ENCODE measurements at regions of chr9 and their contacts with region 1.

Region 1: DNA sequence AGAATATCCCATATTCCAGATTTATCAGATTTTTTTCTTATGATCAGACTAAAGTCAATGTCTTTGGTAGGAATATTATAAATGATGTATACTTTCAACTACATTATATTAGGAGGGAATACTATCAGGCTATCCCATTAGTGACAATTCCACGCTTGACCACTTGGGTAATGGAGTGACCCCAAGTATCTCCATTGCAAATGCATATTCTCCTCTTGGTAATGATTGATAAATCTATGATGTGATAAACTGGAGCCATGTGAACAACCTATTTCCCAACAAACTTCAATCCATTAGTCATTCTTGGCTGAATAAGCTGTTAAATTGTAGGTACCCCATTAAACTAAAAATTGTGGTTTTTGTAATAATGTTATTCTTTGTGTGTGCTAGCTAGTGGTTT is 12.2 kb upstream of the MPDZ start:
- DNase-seq: no peak
- H3K4me3 ChIP-seq: no peak overlapping the region
- H3K27ac ChIP-seq: no peak overlapping the region
- H3K4me1 ChIP-seq: peaks cover 13% of the 10 kb centered on the region
- H3K27me3 ChIP-seq: no peaks in the 10 kb centered on the region
- CTCF ChIP-seq: no peak

Region 2: DNA sequence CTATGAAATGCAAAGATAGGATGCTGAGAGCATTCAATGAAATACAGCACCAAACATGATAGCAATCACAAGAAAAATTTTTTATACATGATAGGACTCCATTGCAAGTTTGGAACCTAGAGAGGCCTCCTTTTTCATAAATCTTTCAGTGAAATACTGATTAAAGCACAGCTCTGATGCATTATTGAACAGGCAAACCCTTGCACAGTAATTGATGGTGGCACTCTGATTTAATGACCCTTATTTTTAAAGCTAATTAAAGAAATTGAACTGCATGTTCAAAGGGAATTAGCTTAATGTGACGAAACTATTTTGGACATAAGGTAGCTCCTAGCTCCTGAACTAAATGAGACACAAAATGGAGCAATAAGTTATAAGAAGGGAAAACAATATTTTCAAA is 56.8 kb before region 1 on chr9:
- intact Hi-C with region 1: loop called (anchors 2 kb)
- DNase-seq: no peak
- H3K4me3 ChIP-seq: no peak overlapping the region
- H3K27ac ChIP-seq: no peak overlapping the region
- H3K4me1 ChIP-seq: no peaks in the 10 kb centered on the region
- H3K27me3 ChIP-seq: no peaks in the 10 kb centered on the region
- CTCF ChIP-seq: no peak

Measured in left ventricle myocardium inferior (tissue), 1 donor.